ENCODE measurements at regions of chr17 and their contacts with region 1.

Region 1: GRCh38 chr17:29389982-29390850 is at the start of gene TAOK1:
- DNase-seq: peak; percentile 86
- ATAC-seq: peak; percentile 96
- H3K4me3 ChIP-seq: peak within 1 kb of the TSS; percentile 68 to 69
- H3K27ac ChIP-seq: peak within 1 kb of the TSS; percentile 94
- H3K4me1 ChIP-seq: peaks cover 19% of the 10 kb centered on the region; the same call in 1 of the 2 replicates
- H3K27me3 ChIP-seq: no peaks in the 10 kb centered on the region
- CTCF ChIP-seq: no peak
- total RNA-seq, gene TAOK1: 111 TPM

Region 2: DNA sequence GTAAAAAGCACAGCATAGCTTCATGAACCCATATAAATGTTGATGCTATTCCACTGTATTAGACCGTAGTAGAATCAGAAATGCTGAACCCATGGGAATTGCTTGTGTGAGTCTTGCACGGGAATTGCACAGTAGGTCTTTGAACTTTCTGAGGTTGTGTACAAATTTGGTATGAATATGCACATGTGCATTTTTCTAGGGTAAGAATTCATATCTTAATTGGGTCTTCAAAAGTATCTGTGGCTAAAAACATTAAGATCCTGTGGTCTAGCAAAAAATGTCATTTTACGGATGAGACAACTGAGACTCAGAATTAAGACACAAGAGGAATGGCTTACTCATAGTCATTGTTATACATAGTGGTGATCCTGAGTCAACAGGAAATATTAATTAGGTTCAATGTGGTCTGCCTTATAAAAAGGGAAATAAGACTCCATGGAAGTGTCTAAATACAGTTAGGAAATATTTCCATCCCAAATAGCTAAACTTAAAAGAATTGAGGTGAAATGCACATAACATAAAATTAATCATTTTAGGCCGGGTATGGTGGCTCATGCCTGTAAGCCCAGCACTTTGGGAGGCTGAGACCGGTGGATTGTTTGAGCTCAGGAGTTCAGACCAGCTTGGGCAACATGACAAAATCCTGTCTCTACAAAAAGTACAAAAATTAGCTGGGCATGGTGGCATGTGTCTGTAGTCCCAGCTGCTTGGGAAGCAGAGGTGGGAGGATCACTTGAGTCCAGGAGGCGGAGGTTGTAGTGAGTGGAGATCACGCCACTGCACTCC is 22.8 kb after region 1 on chr17:
- CTCF ChIA-PET with region 1: no interaction called
- POLR2A ChIA-PET with region 1: interaction called, 12 read pairs
- in situ Hi-C with region 1: no loop called
- intact Hi-C with region 1: no loop called
- DNase-seq: no peak
- ATAC-seq: 0 out of 2 replicates have a peak, but pooled peaks have one; percentile 56
- H3K4me3 ChIP-seq: no peak overlapping the region
- H3K27ac ChIP-seq: no peak overlapping the region; the same call in 1 of the 2 replicates
- H3K4me1 ChIP-seq: peaks cover 7% of the 10 kb centered on the region
- H3K27me3 ChIP-seq: no peaks in the 10 kb centered on the region
- CTCF ChIP-seq: no peak

Measured in Panc1 (cell line).